Sigmoid colon (tissue), 7 donors: ENCODE measurements at regions of chr1 and their contacts with region 1.

Region 1: DNA sequence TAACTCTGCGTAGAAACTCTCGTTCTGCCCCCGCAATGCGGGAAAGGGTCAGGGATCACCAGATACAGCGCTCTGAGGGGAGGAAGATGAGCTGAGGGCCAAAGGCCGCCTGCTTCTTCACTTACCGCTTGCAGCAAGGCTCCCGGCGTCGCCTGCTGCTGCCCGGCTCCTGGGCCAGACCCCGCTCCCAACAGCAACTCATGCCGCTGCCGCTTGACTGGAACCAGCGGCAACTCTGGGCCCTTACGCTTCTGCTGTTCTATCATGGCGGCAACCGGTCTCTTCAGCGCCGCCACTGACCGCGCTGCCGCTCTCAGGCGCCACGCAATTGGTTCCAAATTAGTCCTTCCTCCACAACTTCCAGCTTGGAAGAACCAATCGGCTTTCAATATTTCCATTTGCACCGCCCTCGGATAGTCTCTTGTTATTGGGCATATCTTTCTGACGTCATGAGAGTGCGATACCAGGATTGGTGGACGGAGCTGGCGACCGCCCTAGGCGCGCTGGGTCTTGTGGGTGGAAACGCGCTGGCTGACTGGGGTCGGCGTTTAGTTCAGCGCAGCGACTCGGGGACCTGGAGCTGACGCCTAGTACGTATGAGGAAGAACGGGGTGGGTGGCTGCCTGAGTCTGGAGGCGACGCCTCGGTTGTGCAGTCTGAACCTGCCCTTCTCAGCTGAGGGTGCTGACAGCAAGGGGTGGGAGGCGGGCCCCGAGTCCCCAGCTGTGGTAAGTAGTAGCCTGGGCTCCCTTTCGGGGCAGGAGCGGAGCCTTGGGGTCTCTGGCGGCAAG is at the starts of genes SNRNP40 and ZCCHC17:
- DNase-seq: peak; percentile 98
- H3K4me3 ChIP-seq: peak within 1 kb of the TSS; percentile 76 to 91 (median 83)
- H3K27ac ChIP-seq: peak within 1 kb of the TSS; percentile 90 to 94 (median 92)
- H3K4me1 ChIP-seq: peaks cover 0 to 47% (median 30%) of the 10 kb centered on the region in 4 donors
- H3K27me3 ChIP-seq: no peaks in the 10 kb centered on the region
- CTCF ChIP-seq: no peak
- EP300 ChIP-seq: no peak
- POLR2A ChIP-seq: peak; percentile 62 to 70
- total RNA-seq, gene SNRNP40: 19.4 to 36.4 (median 30.3) TPM
- total RNA-seq, gene ZCCHC17: 23.3 to 33.2 (median 25.7) TPM

Region 2: GRCh38 chr1:31159869-31160611 is 136.6 kb before region 1 on chr1:
- intact Hi-C with region 1: loop called (anchors 5 kb)
- DNase-seq: no peak
- H3K4me3 ChIP-seq: no peak overlapping the region
- H3K27ac ChIP-seq: no peak overlapping the region
- H3K4me1 ChIP-seq: peaks cover 0 to 12% (median 5%) of the 10 kb centered on the region in 4 donors
- H3K27me3 ChIP-seq: no peaks in the 10 kb centered on the region
- CTCF ChIP-seq: no peak
- EP300 ChIP-seq: no peak
- POLR2A ChIP-seq: no peak

Region 3: DNA sequence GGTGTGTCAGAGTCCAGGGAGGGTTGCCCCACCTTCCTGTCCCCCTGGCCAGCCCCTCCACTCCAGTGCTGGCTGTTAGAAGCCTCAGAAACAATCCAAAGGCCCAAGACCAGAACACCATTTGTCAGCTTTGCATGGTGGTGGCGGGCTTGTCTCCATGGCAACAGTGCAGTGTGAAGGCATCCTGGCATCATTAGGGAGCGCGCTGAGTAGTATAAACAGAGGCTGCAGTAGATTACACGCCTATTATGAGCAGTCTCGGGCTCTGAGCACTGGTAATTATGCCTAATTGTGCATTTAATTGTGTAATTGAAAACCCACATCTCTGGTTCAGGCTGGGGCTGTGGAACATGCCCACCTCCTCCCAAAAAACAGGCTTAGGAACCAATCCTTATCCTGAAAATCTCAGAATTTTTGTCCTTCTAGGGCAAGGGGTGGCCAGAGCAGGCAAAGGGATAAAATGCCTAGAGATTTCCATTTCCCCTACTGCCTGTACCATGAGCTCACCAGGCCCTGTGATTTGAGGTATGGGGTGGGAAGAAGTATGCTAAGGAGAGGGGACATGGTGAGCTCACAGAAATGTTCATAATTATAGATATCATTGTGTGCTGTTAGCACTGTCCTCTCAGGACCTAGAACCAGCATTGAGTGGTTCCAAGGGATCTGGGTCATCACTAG is 68.7 kb before region 1 on chr1:
- intact Hi-C with region 1: no loop called
- DNase-seq: no peak
- H3K4me3 ChIP-seq: no peak overlapping the region
- H3K27ac ChIP-seq: no peak overlapping the region
- H3K4me1 ChIP-seq: no peaks in the 10 kb centered on the region
- H3K27me3 ChIP-seq: peaks cover 0 to 13% (median 0%) of the 10 kb centered on the region in 3 donors
- CTCF ChIP-seq: no peak
- EP300 ChIP-seq: no peak
- POLR2A ChIP-seq: no peak